PC-9 (cell line): ENCODE measurements at regions of chr5 and their contacts with region 1.

Region 1: DNA sequence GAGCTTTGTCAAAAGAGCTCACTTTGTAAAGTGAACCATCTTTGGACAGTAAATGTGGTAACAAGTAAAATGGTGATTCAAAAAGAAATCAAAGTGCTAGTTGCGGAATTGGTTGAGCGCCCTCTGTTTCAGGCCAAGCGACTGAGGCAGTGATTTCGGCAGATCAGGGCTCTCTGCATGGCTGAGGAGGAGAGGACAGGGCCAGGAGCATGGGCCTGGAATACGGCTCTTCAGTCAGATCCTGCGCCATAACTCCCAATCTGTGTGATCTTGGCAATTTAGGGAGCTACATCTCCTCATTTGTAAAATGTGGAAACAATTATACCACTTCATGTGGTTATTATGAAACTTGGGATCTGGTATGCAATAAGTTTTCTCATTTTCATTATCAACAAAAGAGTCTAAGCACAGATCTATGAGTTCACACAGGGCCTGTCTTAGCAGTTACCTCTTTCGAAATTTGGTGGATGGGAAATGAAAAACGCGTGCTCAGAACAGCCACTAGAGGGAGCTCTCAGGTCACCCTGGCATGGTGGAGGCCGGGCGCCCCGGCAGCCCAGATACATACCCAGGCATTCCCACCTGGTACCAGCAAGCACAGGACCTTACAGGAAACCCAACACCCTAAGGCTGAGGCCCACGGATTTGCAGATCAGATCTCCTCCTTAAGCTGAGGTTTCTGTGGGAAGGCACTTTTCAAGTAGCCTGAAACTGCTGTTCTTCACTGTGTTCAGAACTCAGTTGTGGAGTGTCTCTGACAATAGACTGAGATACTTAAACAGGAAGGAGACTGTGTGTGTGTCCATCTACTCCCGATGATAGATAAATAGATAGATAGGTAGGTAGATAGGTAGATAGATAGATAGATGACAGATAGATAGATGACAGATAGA is 303.7 kb downstream of the RAB3C start:
- DNase-seq: peak; percentile 40 to 56
- H3K4me3 ChIP-seq: no peak overlapping the region
- H3K27ac ChIP-seq: no peak overlapping the region
- H3K4me1 ChIP-seq: peaks cover 7% of the 10 kb centered on the region
- H3K27me3 ChIP-seq: no peaks in the 10 kb centered on the region
- CTCF ChIP-seq: peak; percentile 93

Region 2: GRCh38 chr5:59007460-59008063 is 121.0 kb after region 1 on chr5:
- CTCF ChIA-PET with region 1: interaction called, 4 read pairs
- POLR2A ChIA-PET with region 1: no interaction called
- intact Hi-C with region 1: loop called (anchors 1 kb)
- DNase-seq: no peak
- H3K4me3 ChIP-seq: no peak overlapping the region
- H3K27ac ChIP-seq: no peak overlapping the region
- H3K4me1 ChIP-seq: no peaks in the 10 kb centered on the region
- H3K27me3 ChIP-seq: no peaks in the 10 kb centered on the region
- CTCF ChIP-seq: peak; percentile 71

Region 3: GRCh38 chr5:59126708-59127573 is 240.4 kb after region 1 on chr5:
- CTCF ChIA-PET with region 1: interaction called, 4 read pairs
- POLR2A ChIA-PET with region 1: no interaction called
- intact Hi-C with region 1: loop called (anchors 1 kb)
- DNase-seq: peak in 1 of 2 experiments; percentile 28
- H3K4me3 ChIP-seq: no peak overlapping the region
- H3K27ac ChIP-seq: no peak overlapping the region
- H3K4me1 ChIP-seq: peaks cover 11% of the 10 kb centered on the region; the same call in 1 of the 2 replicates
- H3K27me3 ChIP-seq: no peaks in the 10 kb centered on the region
- CTCF ChIP-seq: no peak

Region 4: DNA sequence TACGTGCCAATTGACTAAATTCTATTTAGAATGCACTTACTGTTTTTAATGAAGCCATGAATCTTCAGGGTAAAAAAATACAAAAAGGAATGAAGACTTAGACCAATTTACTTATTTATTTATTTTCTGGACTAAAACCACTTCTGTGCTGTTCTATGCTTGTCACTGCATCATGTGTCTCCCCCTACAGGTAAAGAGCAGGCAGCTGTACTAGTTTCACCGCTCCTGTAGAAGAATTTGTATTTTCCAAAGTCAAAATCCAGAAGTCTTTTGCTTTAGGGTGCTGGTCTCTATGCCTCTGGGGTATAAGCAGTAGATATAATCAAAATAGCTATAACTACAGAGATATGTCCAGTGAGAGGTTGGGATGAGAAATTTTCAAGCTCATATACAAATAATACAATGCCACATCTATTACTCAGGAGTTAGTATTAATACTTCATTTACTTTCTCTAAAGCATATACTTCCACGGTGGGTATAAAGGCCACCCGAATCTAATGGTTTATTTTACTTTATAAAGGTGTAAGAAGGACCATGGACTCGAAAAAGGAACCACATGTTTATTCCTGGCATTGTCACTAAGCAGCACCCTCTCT is 287.8 kb after region 1 on chr5:
- CTCF ChIA-PET with region 1: interaction called, 9 read pairs
- POLR2A ChIA-PET with region 1: no interaction called
- intact Hi-C with region 1: loop called (anchors 1 kb)
- DNase-seq: peak; percentile 14 to 40
- H3K4me3 ChIP-seq: no peak overlapping the region
- H3K27ac ChIP-seq: no peak overlapping the region
- H3K4me1 ChIP-seq: no peaks in the 10 kb centered on the region
- H3K27me3 ChIP-seq: no peaks in the 10 kb centered on the region
- CTCF ChIP-seq: peak; percentile 87

Region 5: GRCh38 chr5:59188419-59189225 is 302.1 kb after region 1 on chr5:
- CTCF ChIA-PET with region 1: no interaction called
- POLR2A ChIA-PET with region 1: no interaction called
- intact Hi-C with region 1: loop called (anchors 5 kb)
- DNase-seq: peak in 1 of 2 experiments; percentile 35
- H3K4me3 ChIP-seq: no peak overlapping the region; the same call in 1 of the 2 replicates
- H3K27ac ChIP-seq: no peak overlapping the region
- H3K4me1 ChIP-seq: peaks cover 4% of the 10 kb centered on the region
- H3K27me3 ChIP-seq: no peaks in the 10 kb centered on the region
- CTCF ChIP-seq: peak; percentile 89

Region 6: DNA sequence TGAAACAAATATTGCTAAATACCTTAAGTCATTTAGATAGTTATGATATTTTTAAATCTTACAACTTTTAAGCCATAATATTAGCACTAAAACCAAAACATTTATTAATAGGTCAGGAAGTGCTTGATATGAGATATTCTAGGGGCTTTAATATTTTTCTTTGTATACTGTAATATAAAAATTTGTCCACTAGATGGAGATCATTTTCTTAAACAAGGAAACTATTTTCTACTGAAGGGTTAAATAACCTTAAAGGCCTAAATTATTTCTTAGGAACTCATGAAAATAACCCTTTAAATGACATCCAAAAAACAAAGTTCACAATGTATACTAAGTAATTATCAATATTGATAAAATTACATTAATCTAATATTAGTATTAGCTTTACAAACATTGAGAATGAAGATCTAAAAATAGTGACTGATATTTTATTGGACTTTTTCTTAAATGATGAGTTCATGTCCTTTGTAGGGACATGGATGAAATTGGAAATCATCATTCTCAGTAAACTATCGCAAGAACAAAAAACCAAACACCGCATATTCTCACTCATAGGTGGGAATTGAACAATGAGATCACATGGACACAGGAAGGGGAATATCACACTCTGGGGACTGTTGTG is 332.0 kb after region 1 on chr5:
- CTCF ChIA-PET with region 1: no interaction called
- POLR2A ChIA-PET with region 1: no interaction called
- intact Hi-C with region 1: loop called (anchors 1 kb)
- DNase-seq: no peak
- H3K4me3 ChIP-seq: no peak overlapping the region
- H3K27ac ChIP-seq: no peak overlapping the region
- H3K4me1 ChIP-seq: no peaks in the 10 kb centered on the region; the same call in 1 of the 2 replicates
- H3K27me3 ChIP-seq: no peaks in the 10 kb centered on the region
- CTCF ChIP-seq: peak; percentile 69